Endothelial cell of umbilical vein (primary cell): ENCODE measurements at regions of chr19 and their contacts with region 1.

Region 1: DNA sequence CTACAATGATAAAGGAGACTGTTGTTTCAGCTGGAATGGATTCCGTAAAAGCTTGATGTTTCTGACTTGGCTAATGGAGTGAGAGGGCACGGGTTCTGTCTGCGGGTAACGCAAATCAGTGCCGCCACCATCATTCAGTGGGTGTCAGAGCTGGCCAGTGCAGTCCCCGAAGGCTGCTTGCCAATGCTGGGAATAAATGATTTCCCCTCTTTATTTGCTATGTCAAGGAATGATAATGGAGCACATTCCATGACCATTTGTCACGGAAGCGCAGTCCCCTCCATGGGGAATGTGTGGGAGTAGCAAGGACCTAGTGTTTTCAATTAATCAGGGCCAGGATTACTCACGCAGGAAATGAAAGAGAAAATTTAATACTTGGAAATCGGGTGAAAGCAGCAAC is 899.3 kb downstream of the UQCRFS1 start:
- DNase-seq: peak; percentile 77
- H3K4me3 ChIP-seq: no peak overlapping the region
- H3K27ac ChIP-seq: peak overlapping the region; percentile 43
- H3K4me1 ChIP-seq: peaks cover 13% of the 10 kb centered on the region
- H3K27me3 ChIP-seq: no peaks in the 10 kb centered on the region
- CTCF ChIP-seq: no peak
- POLR2A ChIP-seq: no peak

Region 2: DNA sequence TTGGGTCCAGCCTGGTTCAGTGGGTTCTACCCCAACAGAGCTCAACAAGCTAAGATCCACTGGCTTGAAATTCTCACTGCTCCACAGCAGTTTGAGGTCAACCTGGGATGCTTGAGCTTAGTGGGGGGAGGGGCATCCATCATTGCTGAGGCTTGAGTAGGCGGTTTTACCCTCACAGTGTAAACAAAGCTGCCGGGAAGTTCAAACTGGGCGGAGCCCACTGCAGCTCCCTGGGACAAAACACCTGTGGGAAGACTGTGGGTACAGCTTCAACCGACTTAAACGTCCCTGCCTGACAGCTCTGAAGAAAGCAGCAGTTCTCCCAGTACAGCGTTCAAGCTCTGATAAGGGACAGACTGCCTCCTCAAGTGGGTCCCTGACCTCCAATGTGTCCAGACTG is 262.6 kb before region 1 on chr19:
- CTCF ChIA-PET with region 1: no interaction called
- POLR2A ChIA-PET with region 1: no interaction called
- dilution Hi-C with region 1: no loop called
- intact Hi-C with region 1: no loop called
- DNase-seq: no peak
- H3K4me3 ChIP-seq: no peak overlapping the region
- H3K27ac ChIP-seq: no peak overlapping the region
- H3K4me1 ChIP-seq: no peaks in the 10 kb centered on the region
- H3K27me3 ChIP-seq: no peaks in the 10 kb centered on the region
- CTCF ChIP-seq: no peak
- POLR2A ChIP-seq: no peak

Region 3: GRCh38 chr19:28289295-28290063 is 24.2 kb before region 1 on chr19:
- CTCF ChIA-PET with region 1: interaction called, 3 read pairs
- POLR2A ChIA-PET with region 1: no interaction called
- dilution Hi-C with region 1: no loop called
- intact Hi-C with region 1: loop called (anchors 2 kb)
- DNase-seq: peak; percentile 37
- H3K4me3 ChIP-seq: no peak overlapping the region
- H3K27ac ChIP-seq: no peak overlapping the region
- H3K4me1 ChIP-seq: peaks cover 22% of the 10 kb centered on the region
- H3K27me3 ChIP-seq: no peaks in the 10 kb centered on the region
- CTCF ChIP-seq: no peak
- POLR2A ChIP-seq: no peak

Region 4: GRCh38 chr19:28301961-28302360 is 11.7 kb before region 1 on chr19:
- CTCF ChIA-PET with region 1: no interaction called
- POLR2A ChIA-PET with region 1: no interaction called
- dilution Hi-C with region 1: no loop called
- intact Hi-C with region 1: no loop called
- DNase-seq: no peak
- H3K4me3 ChIP-seq: no peak overlapping the region
- H3K27ac ChIP-seq: no peak overlapping the region
- H3K4me1 ChIP-seq: no peaks in the 10 kb centered on the region
- H3K27me3 ChIP-seq: no peaks in the 10 kb centered on the region
- CTCF ChIP-seq: no peak
- POLR2A ChIP-seq: no peak